ENCODE measurements at regions of chr3 and their contacts with region 1.

Region 1: DNA sequence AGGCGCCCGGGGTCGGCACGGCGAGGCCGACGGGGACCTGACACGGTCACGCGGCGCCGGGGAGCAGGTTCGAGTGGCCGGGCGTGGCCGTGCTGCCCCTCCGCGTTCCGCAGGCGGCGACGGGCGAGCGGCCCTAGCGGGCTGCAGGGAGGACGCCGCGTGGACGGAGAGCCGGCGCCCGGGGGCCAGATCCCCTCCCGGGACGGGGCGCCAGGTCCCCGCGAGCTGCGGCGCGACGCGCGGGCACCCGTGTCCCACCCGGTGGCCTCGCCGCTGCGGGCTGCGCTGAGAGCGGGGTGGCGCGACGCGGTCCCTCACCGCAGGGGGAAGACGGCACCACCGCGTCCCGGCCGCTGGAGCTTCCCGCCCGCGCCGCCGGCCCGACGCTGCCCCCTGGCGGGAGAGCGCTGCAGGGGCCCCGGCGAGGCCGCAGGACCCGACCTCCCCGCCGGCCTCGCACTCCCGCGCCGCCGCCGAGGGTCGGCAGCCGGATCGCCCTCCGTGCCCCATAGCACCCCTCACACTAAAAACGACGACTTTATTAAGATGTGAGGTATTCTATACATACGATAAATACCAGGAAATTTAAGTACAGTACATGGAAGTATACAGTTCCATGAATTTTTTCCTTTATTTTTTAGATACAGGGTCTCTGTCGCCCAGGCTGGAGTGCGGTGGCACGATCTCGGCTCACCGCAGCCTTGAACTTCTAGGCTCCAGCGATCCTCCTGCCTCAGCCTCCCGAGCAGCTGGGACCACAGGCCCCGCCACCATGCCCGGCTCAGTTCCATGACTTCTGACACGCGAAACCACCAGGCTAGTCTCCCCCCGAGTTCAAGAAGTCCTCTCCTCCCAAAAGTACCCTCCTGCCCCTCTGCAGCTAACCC is 1.3 kb upstream of the PIGZ start:
- DNase-seq: peak; percentile 73
- H3K4me3 ChIP-seq: peak overlapping the region; percentile 72
- H3K27ac ChIP-seq: no peak overlapping the region
- H3K4me1 ChIP-seq: peaks cover 8% of the 10 kb centered on the region
- CTCF ChIP-seq: peak; percentile 77

Region 2: DNA sequence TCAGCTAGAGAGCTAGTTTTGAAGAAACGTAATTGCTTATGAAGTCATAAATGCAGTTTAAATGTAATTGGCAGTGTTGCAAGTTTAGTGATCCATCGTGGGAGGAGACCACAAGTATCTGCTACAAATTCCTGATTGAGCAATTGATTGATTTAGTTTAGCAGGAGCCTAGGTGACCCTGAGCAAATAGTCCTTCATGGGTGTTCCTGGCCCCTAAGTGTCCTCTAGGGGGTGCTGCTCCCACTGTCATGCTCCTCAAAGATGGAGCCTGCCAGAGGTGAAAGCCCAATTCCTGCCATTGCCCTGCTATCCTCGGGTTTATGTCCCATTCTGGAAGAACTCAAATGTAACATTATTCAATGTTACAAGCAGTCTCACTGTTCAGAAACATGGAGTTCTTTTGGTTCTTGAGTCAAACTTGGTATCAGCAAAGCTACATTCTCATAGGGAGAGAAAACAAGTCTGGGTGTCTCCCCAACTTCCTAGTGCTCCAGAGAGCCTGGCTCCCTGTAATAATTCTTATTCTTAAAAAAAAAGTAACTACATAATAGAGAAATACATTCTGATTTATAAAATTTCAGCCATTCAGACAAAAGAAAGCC is 132.0 kb before region 1 on chr3:
- CTCF ChIA-PET with region 1: no interaction called
- POLR2A ChIA-PET with region 1: no interaction called
- intact Hi-C with region 1: loop called (anchors 1 kb)
- DNase-seq: peak; percentile 74
- H3K4me3 ChIP-seq: no peak overlapping the region
- H3K27ac ChIP-seq: no peak overlapping the region
- H3K4me1 ChIP-seq: no peaks in the 10 kb centered on the region
- CTCF ChIP-seq: peak; percentile 93

Region 3: GRCh38 chr3:196920733-196921132 is 49.2 kb before region 1 on chr3:
- CTCF ChIA-PET with region 1: no interaction called
- POLR2A ChIA-PET with region 1: interaction called, 3 read pairs
- intact Hi-C with region 1: loop called (anchors 1 kb)
- DNase-seq: no peak
- H3K4me3 ChIP-seq: no peak overlapping the region
- H3K27ac ChIP-seq: no peak overlapping the region
- H3K4me1 ChIP-seq: peaks cover 5% of the 10 kb centered on the region
- CTCF ChIP-seq: no peak